ENCODE measurements at regions of chr12 and their contacts with region 1.

Region 1: DNA sequence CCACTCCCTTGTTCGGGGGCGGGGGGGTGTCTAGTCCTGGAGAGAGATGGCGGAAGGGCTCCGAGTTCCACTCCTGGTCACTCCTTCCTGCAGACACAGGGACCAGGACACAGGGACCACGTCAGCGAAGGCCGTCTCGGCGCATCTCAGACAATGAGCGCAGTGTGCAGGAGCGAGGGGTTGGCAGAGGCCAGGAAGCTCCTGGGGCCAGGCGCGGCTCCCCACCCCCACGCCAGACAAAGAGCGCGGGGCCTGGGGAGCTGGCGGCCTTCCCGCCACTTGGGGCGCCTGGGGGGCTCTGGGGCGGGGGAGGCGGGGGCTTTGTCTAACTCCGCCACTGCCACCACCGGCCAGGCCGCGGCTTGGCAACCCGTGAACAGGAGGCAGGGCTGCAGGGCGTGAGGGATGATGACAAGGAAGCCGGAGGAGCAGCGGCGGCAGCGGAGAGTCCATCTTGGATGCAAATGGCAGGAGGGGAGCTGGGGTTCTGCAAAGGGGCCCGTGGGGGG is 2.2 kb downstream of the CDK2AP1 start:
- DNase-seq: peak; percentile 68 to 93 (median 77)
- H3K4me3 ChIP-seq: peak overlapping the region in 3 of 4 donors; percentile 33 to 90 (median 64)
- H3K27ac ChIP-seq: peak overlapping the region; percentile 21 to 98 (median 63)
- H3K4me1 ChIP-seq: peaks cover 18 to 40% of the 10 kb centered on the region in 2 donors
- H3K27me3 ChIP-seq: no peaks in the 10 kb centered on the region
- CTCF ChIP-seq: peak in 1 of 6 experiments; percentile 17
- POLR2A ChIP-seq: peak in 1 of 2 donors; percentile 27

Region 2: GRCh38 chr12:123337070-123337469 is 67.6 kb after region 1 on chr12:
- intact Hi-C with region 1: loop called in 1 of 2 experiments (anchors 10 kb)
- DNase-seq: no peak
- H3K4me3 ChIP-seq: no peak overlapping the region
- H3K27ac ChIP-seq: no peak overlapping the region
- H3K4me1 ChIP-seq: no peaks in the 10 kb centered on the region
- H3K27me3 ChIP-seq: no peaks in the 10 kb centered on the region
- CTCF ChIP-seq: no peak
- POLR2A ChIP-seq: no peak

Region 3: DNA sequence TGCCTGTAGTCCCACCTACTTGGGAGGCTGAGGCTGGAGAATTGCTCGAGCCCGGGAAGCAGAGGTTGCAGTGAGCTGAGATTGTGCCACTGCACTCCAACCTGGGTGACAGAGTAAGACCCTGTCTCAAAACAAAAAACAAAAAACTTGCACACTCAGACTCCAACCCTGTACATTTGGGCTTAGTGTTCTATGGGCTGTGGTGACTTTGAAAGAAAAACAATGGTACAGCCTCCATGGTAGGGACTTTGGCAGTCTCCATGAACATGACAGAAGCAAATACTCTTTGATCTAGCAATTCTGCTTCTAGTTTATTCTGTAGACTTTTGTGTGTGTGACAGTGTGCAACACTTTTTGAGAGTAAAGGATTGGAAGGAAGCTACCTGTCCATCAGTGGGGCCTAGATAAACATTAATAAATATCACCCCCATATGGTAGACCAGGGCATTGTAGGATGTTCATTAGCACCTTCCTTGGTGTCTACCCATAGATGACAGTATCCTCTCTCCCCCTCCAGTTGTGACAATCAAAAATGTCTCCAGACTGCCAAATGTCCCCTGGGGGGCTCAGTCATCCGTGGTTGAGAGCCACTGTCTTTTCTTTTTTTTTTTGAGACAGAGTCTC is 199.2 kb after region 1 on chr12:
- intact Hi-C with region 1: no loop called
- DNase-seq: no peak
- H3K4me3 ChIP-seq: no peak overlapping the region
- H3K27ac ChIP-seq: no peak overlapping the region
- H3K4me1 ChIP-seq: peaks cover 0 to 9% of the 10 kb centered on the region in 2 donors
- H3K27me3 ChIP-seq: no peaks in the 10 kb centered on the region
- CTCF ChIP-seq: no peak
- POLR2A ChIP-seq: no peak

Region 4: GRCh38 chr12:123614531-123614930 is 345.1 kb after region 1 on chr12:
- intact Hi-C with region 1: loop called in 1 of 2 experiments (anchors 10 kb)
- DNase-seq: peak; percentile 52 to 85 (median 76)
- H3K4me3 ChIP-seq: no peak overlapping the region
- H3K27ac ChIP-seq: peak overlapping the region in 3 of 5 donors; percentile 30 to 71 (median 38)
- H3K4me1 ChIP-seq: peaks cover 6 to 8% of the 10 kb centered on the region in 2 donors
- H3K27me3 ChIP-seq: no peaks in the 10 kb centered on the region
- CTCF ChIP-seq: no peak
- POLR2A ChIP-seq: no peak

Measured in adrenal gland (tissue), 19 donors.